ENCODE measurements at regions of chr7 and their contacts with region 1.

Region 1: DNA sequence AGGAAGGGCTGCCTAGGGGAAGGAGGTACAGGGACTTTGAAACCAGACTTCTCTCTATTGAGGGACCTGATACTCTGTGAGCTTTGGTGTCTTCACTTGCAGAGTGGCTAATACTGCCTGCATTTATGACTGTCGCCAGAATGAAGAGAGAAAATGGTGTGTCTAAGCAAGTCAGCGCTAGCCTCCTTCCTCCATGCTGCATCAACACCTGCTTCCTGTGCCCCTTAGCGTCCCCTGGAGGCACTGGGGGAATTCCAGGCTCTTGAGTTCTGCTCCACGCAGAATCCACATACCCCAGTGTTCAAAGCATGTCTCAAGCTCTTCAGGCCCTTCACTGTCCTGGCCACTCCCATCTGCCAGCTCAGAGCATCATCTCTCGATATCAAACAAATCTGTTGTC is 140.5 kb downstream of the PKD1L1 start:
- H3K4me3 Mint-ChIP-seq: no peak overlapping the region
- H3K27ac Mint-ChIP-seq: no peak overlapping the region
- H3K4me1 Mint-ChIP-seq: peaks cover 47% of the 10 kb centered on the region
- H3K27me3 Mint-ChIP-seq: no peaks in the 10 kb centered on the region

Region 2: DNA sequence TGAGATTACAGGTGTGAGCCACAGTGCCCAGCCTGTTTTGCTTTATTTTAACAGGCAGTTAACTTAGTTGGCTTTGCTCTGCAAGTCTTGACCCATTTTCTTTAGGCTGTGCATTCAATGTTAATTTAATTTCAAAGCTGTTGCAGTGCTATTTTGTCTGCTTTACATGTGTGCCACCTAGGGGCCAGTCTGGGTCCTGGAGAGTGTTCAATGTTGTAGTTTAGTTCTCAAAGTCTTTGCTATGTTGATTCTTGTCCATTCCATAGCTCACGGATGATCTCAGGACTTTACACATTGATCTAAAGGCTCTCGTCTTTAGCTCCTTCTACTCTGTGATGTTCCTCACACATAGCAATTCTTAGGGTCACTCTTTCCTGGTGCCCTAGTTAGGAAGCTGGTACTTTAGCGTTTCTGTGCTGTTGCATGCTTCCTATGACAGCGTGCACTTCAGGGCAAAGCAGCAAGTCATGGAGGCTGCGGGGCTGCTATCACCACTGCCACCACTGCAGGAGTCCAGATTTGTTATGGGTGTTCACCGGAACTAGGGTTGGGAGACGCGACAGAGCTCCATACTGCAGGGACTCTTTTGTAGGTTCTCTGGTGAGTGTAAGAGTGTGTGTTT is 347.1 kb after region 1 on chr7:
- intact Hi-C with region 1: loop called (anchors 10 kb)
- H3K4me3 Mint-ChIP-seq: no peak overlapping the region
- H3K27ac Mint-ChIP-seq: no peak overlapping the region
- H3K4me1 Mint-ChIP-seq: no peaks in the 10 kb centered on the region
- H3K27me3 Mint-ChIP-seq: peaks cover 9% of the 10 kb centered on the region